PC-3 (cell line): ENCODE measurements at regions of chr12 and their contacts with region 1.

Region 1: GRCh38 chr12:57124259-57124877 is 3.9 kb upstream of the LRP1 start:
- DNase-seq: peak; percentile 87
- ATAC-seq: peak; percentile 33
- H3K4me3 ChIP-seq: no peak overlapping the region
- H3K27ac ChIP-seq: no peak overlapping the region
- H3K4me1 ChIP-seq: peaks cover 16% of the 10 kb centered on the region
- H3K27me3 ChIP-seq: no peaks in the 10 kb centered on the region
- CTCF ChIP-seq: peak; percentile 93

Region 2: GRCh38 chr12:57001448-57001906 is 122.9 kb before region 1 on chr12:
- CTCF ChIA-PET with region 1: no interaction called
- POLR2A ChIA-PET with region 1: no interaction called
- intact Hi-C with region 1: no loop called
- DNase-seq: peak; percentile 81
- ATAC-seq: peak; percentile 48
- H3K4me3 ChIP-seq: no peak overlapping the region
- H3K27ac ChIP-seq: no peak overlapping the region
- H3K4me1 ChIP-seq: peaks cover 21% of the 10 kb centered on the region
- H3K27me3 ChIP-seq: no peaks in the 10 kb centered on the region
- CTCF ChIP-seq: peak; percentile 90

Region 3: DNA sequence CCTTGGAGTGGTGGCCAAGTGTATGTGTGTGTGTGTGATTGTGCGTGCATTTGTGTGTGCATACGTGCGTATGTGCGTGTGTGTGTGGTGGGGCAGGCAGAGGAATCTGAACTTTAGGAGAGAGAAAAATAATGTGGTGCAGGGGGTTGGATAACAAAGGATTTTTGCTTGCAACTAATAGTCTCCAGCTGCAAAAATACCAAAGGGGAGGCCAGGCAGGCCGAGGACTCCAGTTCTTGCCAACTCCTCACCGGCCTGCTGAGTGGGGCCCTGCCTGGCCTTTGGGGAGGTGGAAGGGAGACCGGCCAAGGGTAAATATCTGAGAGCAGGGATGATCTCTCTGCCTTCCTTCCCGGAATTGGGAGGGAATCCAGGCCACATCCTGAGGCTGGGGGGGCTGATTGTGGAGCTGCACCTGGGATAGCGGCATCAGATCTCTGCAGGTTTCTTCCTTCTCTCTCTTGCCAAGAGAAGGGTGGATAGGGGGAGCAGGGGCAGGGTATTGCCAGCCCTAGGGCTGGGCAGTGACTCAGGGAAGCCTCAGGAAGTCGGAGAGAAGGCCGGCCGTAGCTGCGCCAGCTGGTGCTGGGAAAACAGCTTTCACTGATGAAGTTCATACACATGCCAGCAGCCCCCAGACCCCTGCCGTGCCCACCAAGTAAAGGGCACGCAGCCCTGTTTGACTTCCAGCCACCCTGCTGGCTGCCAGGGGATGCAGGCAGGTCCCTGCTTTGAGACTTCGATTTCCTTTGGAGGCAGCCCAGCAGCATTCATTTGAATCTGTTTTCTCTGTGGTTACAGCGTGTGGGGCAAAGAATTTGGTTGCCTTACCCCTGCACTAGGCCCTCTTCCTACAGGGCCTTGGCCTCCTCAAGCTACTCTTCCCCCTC is 27.6 kb after region 1 on chr12:
- CTCF ChIA-PET with region 1: interaction called, 5 read pairs
- POLR2A ChIA-PET with region 1: interaction called, 7 read pairs
- intact Hi-C with region 1: loop called (anchors 2 kb)
- DNase-seq: peak; percentile 81
- ATAC-seq: peak; percentile 97
- H3K4me3 ChIP-seq: peak overlapping the region; percentile 23; the same call in 1 of the 2 replicates
- H3K27ac ChIP-seq: peak overlapping the region; percentile 83
- H3K4me1 ChIP-seq: peaks cover 28% of the 10 kb centered on the region
- H3K27me3 ChIP-seq: no peaks in the 10 kb centered on the region
- CTCF ChIP-seq: 0 out of 2 replicates have a peak, but pooled peaks have one; percentile 21

Region 4: GRCh38 chr12:57175428-57176138 is 51.2 kb after region 1 on chr12:
- CTCF ChIA-PET with region 1: interaction called, 17 read pairs
- POLR2A ChIA-PET with region 1: no interaction called
- intact Hi-C with region 1: loop called (anchors 2 kb)
- DNase-seq: peak; percentile 80
- ATAC-seq: peak; percentile 58
- H3K4me3 ChIP-seq: no peak overlapping the region
- H3K27ac ChIP-seq: no peak overlapping the region
- H3K4me1 ChIP-seq: peaks cover 18% of the 10 kb centered on the region
- H3K27me3 ChIP-seq: no peaks in the 10 kb centered on the region
- CTCF ChIP-seq: peak; percentile 91

Region 5: GRCh38 chr12:57182921-57183790 is 58.8 kb after region 1 on chr12:
- CTCF ChIA-PET with region 1: interaction called, 18 read pairs
- POLR2A ChIA-PET with region 1: no interaction called
- intact Hi-C with region 1: loop called (anchors 1 kb)
- DNase-seq: peak; percentile 92
- ATAC-seq: peak; percentile 99
- H3K4me3 ChIP-seq: no peak overlapping the region
- H3K27ac ChIP-seq: no peak overlapping the region
- H3K4me1 ChIP-seq: peaks cover 9% of the 10 kb centered on the region; the same call in 1 of the 2 replicates
- H3K27me3 ChIP-seq: no peaks in the 10 kb centered on the region
- CTCF ChIP-seq: peak; percentile 93